ENCODE measurements at regions of chr19 and their contacts with region 1.

Region 1: DNA sequence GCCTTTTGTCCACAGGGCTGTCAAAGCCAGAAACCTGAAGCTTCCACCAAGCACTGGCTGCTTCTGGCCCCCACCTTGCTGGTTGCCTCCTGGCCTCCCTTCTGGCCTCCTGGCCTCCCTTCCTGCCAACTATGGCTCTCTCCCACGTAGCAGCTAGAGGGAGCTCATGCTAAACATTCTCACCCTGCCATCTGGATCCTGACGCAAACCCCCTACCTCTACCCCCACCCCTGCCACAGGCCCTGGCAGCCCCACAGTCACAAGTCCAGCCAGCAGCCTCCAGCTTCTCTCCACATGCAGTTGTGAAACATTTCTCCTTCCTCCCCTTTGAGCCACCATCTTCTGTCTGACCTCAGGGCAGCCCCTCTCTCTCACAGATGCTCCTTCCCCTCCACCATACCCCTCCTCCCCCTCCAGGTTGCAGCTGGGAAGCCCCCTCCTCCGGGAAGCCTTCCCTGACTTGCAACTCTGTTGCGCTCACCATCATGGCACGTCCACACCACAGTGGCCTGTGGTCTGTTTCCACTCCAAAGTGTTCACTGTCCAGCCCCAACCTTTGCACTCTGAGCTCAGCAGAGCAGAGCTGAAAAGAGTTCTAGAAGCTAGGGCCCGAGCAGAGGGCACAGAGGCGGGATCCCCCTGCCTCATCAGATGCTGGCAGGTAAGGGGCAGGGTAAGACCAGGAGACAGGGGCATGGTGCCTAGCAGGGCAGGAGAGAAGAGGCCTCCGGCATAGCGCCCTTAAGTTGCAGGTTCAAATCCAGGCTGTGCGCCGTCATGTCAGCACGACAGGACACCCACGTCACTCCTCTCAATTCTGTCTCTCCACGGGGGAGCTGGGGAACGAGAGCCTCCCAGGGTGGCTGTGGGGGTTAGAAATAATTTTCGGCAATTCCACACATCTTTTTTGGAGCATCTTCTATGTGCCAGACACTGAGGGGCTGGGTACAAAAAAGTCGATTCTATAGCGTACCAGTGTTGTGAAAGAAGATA is 7.3 kb downstream of the ADGRL1 start:
- DNase-seq: no peak
- ATAC-seq: no peak
- H3K4me3 ChIP-seq: no peak overlapping the region
- H3K27ac ChIP-seq: no peak overlapping the region
- H3K4me1 ChIP-seq: no peaks in the 10 kb centered on the region
- H3K27me3 ChIP-seq: no peaks in the 10 kb centered on the region
- CTCF ChIP-seq: peak; percentile 44; the same call in 1 of the 2 replicates

Region 2: DNA sequence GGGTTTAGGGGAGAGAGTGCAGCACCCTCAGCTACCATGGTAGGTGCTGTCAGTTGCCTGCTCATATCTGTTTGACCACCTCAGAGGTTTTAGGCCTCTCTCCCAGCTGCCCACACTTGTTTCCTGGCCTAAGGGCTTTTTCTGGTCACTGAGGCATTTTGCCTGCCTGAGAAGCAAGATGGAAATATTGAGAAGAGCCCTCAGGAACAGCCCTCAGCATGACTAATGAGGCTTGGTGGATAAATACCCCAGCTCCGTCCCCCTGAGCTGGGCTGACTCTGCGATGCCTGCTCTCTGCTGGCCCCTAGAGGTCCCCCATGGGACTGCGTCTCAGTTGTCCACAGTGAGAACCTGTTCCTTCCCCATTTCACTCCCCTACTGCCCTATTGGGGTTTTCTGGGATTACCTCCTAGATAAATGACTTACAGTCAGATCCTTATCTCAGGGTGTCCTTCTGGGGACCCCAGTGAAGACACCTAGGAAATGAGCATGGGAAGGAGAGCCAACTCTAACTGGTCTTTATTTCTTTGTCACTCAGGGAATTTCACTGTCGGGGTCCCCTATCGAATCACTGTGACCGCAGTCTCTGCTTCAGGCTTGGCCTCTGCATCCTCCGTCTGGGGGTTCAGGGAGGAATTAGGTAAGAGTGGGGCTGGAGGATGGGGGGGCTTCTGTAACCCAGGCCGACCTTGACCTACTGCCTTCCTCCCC is 150.1 kb before region 1 on chr19:
- CTCF ChIA-PET with region 1: interaction called, 10 read pairs
- POLR2A ChIA-PET with region 1: no interaction called
- intact Hi-C with region 1: no loop called
- DNase-seq: peak; percentile 60
- ATAC-seq: peak; percentile 67
- H3K4me3 ChIP-seq: no peak overlapping the region
- H3K27ac ChIP-seq: no peak overlapping the region
- H3K4me1 ChIP-seq: no peaks in the 10 kb centered on the region
- H3K27me3 ChIP-seq: no peaks in the 10 kb centered on the region
- CTCF ChIP-seq: peak; percentile 97

Region 3: DNA sequence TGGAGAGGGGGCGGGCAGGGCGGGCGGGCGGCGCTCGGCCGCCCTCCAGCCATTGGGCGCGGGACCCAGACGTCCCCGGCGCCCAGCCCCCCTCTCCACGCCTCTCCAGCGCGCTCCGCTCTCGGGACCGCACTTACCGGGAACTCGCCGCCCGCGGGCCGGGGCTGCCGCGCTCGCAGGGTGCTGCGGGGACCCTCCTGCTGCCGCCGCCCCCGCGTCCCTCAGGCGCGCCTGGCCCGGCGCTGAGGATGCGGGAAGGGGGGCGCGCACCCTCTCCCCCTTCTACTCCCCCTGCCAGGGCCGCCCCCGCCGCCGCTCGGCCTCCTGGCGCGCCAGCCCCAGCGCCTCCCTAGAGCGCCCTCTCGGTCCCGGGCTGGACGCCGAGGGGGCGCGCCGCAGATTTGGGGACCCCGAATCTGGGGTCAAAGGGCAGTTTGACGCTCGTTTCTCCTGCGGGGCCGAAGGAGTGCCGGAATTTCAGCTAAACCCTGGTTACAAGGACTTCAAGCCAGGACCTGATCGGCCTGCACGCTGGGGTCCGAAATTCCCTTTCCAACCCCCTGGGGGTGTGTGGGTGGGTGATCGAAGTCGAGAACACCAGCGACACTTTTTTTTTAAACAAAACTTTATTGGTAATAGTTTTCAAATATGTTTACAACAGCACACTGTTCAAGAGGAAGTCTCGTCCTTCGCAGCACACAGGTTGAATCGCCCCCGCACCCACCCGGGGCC is 107.4 kb before region 1 on chr19:
- CTCF ChIA-PET with region 1: no interaction called
- POLR2A ChIA-PET with region 1: no interaction called
- intact Hi-C with region 1: no loop called
- DNase-seq: peak; percentile 64
- ATAC-seq: peak; percentile 78
- H3K4me3 ChIP-seq: peak overlapping the region; percentile 89
- H3K27ac ChIP-seq: no peak overlapping the region
- H3K4me1 ChIP-seq: peaks cover 8% of the 10 kb centered on the region; the same call in 1 of the 2 replicates
- H3K27me3 ChIP-seq: no peaks in the 10 kb centered on the region
- CTCF ChIP-seq: peak; percentile 63

Region 4: GRCh38 chr19:14347999-14348889 is 149.6 kb after region 1 on chr19:
- CTCF ChIA-PET with region 1: interaction called, 14 read pairs
- POLR2A ChIA-PET with region 1: no interaction called
- intact Hi-C with region 1: loop called (anchors 1 kb)
- DNase-seq: peak; percentile 75
- ATAC-seq: peak; percentile 83
- H3K4me3 ChIP-seq: peak overlapping the region; percentile 70
- H3K27ac ChIP-seq: no peak overlapping the region
- H3K4me1 ChIP-seq: peaks cover 5% of the 10 kb centered on the region
- H3K27me3 ChIP-seq: no peaks in the 10 kb centered on the region
- CTCF ChIP-seq: peak; percentile 98

Region 5: DNA sequence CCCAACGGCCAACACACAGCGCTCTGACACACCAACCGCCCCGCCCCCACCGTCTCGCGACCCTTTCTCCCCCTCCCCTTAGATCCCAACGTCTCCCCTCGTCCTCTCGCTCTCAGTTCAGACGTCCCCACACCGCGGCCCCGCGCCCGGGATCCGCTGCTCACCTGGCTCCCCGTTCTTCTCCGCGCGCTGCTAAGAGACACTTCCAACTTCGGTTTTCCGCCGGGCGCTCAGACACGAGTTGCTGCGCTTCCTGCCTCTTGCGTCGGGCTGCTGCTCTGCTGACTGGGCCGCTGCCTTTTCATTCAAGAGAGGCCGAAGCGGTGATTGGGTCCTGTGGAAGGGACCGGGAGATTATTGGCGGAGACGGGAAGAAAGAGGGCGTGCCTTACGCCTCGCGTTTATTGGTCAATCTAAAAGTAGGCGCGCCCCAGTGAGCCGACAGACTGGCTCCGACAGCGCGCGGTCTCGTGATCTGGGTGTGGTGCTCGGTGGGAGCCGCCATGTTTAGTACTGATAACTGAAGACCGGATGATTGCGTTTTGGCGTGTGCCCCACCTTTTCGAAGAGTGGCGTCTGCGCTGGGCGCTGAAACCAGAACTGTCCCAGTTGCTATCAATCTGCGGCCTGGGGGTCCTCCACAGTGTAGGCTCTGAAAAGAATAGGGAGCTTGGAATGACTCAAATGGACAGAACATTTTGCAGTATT is 220.6 kb after region 1 on chr19 and contains the start of gene DDX39A:
- CTCF ChIA-PET with region 1: interaction called, 15 read pairs
- POLR2A ChIA-PET with region 1: no interaction called
- intact Hi-C with region 1: no loop called
- DNase-seq: peak; percentile 100
- ATAC-seq: peak; percentile 98
- H3K4me3 ChIP-seq: peak within 1 kb of the TSS; percentile 98
- H3K27ac ChIP-seq: peak within 1 kb of the TSS; percentile 83
- H3K4me1 ChIP-seq: peaks cover 23% of the 10 kb centered on the region
- H3K27me3 ChIP-seq: no peaks in the 10 kb centered on the region
- CTCF ChIP-seq: no peak
- total RNA-seq, gene DDX39A: 308 and 311 TPM in 2 replicates